GM12878 (cell line): ENCODE measurements at regions of chr13 and their contacts with region 1.

Region 1: DNA sequence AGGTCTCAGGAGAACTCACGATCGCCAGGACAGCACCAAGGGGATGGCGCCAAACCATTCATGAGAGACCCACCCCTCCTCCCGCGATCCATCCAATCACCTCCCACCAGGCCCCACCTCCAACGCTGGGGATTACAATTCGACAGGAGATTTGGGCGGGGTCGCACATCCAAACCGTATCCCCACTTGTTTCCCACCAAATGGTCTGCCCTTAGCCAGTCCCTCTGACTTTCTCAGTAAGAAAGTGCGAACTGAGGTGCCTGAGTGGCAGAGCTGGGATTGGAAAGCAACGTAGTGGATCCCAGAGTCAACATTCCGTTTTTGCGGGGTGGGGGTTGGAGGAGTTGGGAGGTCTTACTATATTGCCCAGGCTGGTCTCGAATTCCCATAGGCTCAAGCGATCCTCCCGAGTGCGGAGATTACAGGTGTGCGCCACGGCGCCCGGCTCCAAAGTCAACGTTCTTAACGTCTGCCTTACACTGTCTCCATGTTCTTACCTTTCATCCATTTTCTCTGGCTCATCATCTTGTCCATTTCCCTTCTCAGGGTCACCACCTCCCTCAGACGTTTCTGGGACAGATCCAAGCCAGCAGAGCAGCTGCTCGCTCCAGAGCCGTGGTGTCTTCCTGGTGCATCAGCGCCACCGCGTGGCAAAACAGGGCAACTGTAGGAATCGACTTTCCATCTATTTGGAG is 102.7 kb upstream of the ABCC4 start:
- DNase-seq: peak; percentile 48
- ATAC-seq: peak; percentile 95
- H3K4me3 ChIP-seq: peak overlapping the region; percentile 65
- H3K27ac ChIP-seq: peak overlapping the region; percentile 36; the same call in 1 of the 2 replicates
- H3K4me1 ChIP-seq: peaks cover 7% of the 10 kb centered on the region; the same call in 1 of the 2 replicates
- H3K27me3 ChIP-seq: no peaks in the 10 kb centered on the region
- CTCF ChIP-seq: peak; percentile 91 to 97 (median 93); a peak in 5 of 6 replicates
- EP300 ChIP-seq: no peak
- POLR2A ChIP-seq: no peak
- RAD21 ChIP-seq: peak; percentile 100

Region 2: GRCh38 chr13:94620286-94620896 is 783.6 kb before region 1 on chr13:
- CTCF ChIA-PET with region 1: interaction called, 38 read pairs
- POLR2A ChIA-PET with region 1: no interaction called
- RAD21 ChIA-PET with region 1: interaction called, 16 read pairs
- SMC1A ChIA-PET with region 1: interaction called, 11 read pairs
- in situ Hi-C with region 1: no loop called
- intact Hi-C with region 1: loop called (anchors 2 kb)
- DNase-seq: no peak
- ATAC-seq: peak; percentile 90
- H3K4me3 ChIP-seq: no peak overlapping the region
- H3K27ac ChIP-seq: no peak overlapping the region
- H3K4me1 ChIP-seq: no peaks in the 10 kb centered on the region
- H3K27me3 ChIP-seq: no peaks in the 10 kb centered on the region
- CTCF ChIP-seq: peak; percentile 73 to 79 (median 73)
- EP300 ChIP-seq: no peak
- POLR2A ChIP-seq: no peak
- RAD21 ChIP-seq: peak; percentile 79

Region 3: GRCh38 chr13:95150555-95150954 is 253.4 kb before region 1 on chr13:
- CTCF ChIA-PET with region 1: interaction called, 16 read pairs
- POLR2A ChIA-PET with region 1: no interaction called
- RAD21 ChIA-PET with region 1: interaction called, 5 read pairs
- SMC1A ChIA-PET with region 1: interaction called, 5 read pairs
- in situ Hi-C with region 1: no loop called
- intact Hi-C with region 1: no loop called
- DNase-seq: no peak
- ATAC-seq: no peak
- H3K4me3 ChIP-seq: no peak overlapping the region
- H3K27ac ChIP-seq: no peak overlapping the region
- H3K4me1 ChIP-seq: no peaks in the 10 kb centered on the region
- H3K27me3 ChIP-seq: no peaks in the 10 kb centered on the region
- CTCF ChIP-seq: no peak
- EP300 ChIP-seq: no peak
- POLR2A ChIP-seq: no peak
- RAD21 ChIP-seq: no peak

Region 4: DNA sequence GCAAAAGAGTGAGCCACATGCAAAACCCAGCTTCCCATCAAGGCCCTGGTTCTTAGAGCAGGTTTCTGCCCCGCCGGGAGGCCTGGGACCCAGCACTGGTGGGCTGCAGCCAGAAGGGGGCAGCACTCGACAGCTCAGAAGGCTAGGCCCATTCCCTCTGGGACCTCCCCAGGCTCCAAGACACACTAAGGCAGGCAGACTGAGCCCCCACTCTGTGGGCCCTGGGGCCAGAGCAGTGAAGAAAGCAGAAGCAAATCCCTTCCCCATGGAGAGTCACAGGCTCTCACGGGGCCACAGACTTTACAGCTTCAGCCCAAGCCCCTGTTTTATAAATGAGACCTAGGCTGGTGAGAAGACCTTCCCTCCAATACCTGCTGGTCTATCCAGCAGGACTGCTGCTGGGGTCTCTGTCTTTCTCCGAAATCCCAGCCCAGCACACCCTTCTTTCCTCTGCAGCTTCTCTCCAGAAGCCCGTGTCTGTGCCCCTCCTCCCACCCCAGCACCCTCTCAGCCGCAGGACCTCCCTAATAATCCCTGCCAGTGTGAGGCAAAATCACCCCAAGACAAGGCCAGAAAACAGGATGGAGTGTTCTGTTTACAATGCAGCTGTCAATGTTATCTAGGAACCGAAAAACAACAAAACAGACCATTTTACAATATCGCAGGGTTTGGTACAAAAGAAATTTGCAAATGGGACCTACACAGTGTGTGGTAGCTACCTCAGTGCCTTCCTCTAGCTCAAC is 212.0 kb before region 1 on chr13:
- CTCF ChIA-PET with region 1: interaction called, 512 read pairs
- POLR2A ChIA-PET with region 1: interaction called, 3 read pairs
- RAD21 ChIA-PET with region 1: interaction called, 290 read pairs
- SMC1A ChIA-PET with region 1: interaction called, 247 read pairs
- in situ Hi-C with region 1: loop called (anchors 5 kb)
- intact Hi-C with region 1: loop called (anchors 1 kb)
- DNase-seq: peak; percentile 45
- ATAC-seq: peak; percentile 99
- H3K4me3 ChIP-seq: no peak overlapping the region
- H3K27ac ChIP-seq: peak overlapping the region; percentile 20; the same call in 1 of the 2 replicates
- H3K4me1 ChIP-seq: peaks cover 4% of the 10 kb centered on the region; the same call in 1 of the 2 replicates
- H3K27me3 ChIP-seq: no peaks in the 10 kb centered on the region
- CTCF ChIP-seq: peak; percentile 94 to 98 (median 97)
- EP300 ChIP-seq: no peak
- POLR2A ChIP-seq: no peak
- RAD21 ChIP-seq: peak; percentile 92

Region 5: GRCh38 chr13:95301183-95301967 is 102.6 kb before region 1 on chr13 and contains the start of gene ABCC4:
- CTCF ChIA-PET with region 1: interaction called, 69 read pairs
- POLR2A ChIA-PET with region 1: no interaction called
- RAD21 ChIA-PET with region 1: interaction called, 79 read pairs
- SMC1A ChIA-PET with region 1: interaction called, 68 read pairs
- in situ Hi-C with region 1: no loop called
- intact Hi-C with region 1: loop called (anchors 2 kb)
- DNase-seq: no peak
- ATAC-seq: peak; percentile 86
- H3K4me3 ChIP-seq: peak within 1 kb of the TSS; percentile 94
- H3K27ac ChIP-seq: peak within 1 kb of the TSS; percentile 89
- H3K4me1 ChIP-seq: peaks cover 14% of the 10 kb centered on the region
- H3K27me3 ChIP-seq: no peaks in the 10 kb centered on the region
- CTCF ChIP-seq: no peak; a peak in 1 of 6 replicates
- EP300 ChIP-seq: no peak
- POLR2A ChIP-seq: peak; percentile 88
- RAD21 ChIP-seq: 0 out of 2 replicates have a peak, but pooled peaks have one; percentile 1
- polyA plus RNA-seq, gene ABCC4: 7.2 to 8.0 TPM

Region 6: DNA sequence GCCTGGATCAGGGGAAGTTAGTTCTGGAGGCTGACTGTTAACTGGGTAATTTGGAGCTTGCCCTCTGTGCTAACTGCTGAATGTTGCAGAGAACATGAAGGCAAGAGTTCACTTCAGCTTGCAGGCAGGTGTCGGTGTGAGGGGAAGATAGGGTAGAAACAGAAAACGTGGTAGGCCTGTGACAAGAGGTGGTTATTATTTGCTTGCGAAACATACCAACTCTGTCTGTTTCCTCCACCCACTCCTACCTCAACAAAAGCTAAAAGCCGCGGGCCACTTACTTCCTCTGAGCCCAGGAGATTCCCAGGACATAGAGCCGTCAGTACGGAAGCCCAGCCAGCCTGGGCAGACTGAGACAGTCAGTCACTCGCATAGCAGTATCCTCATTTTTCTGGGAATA is 16.5 kb after region 1 on chr13:
- CTCF ChIA-PET with region 1: interaction called, 28 read pairs
- POLR2A ChIA-PET with region 1: no interaction called
- RAD21 ChIA-PET with region 1: interaction called, 14 read pairs
- SMC1A ChIA-PET with region 1: interaction called, 13 read pairs
- in situ Hi-C with region 1: no loop called
- intact Hi-C with region 1: no loop called
- DNase-seq: no peak
- ATAC-seq: no peak; the same call in 1 of the 3 replicates
- H3K4me3 ChIP-seq: no peak overlapping the region
- H3K27ac ChIP-seq: no peak overlapping the region
- H3K4me1 ChIP-seq: no peaks in the 10 kb centered on the region
- H3K27me3 ChIP-seq: no peaks in the 10 kb centered on the region
- CTCF ChIP-seq: no peak
- EP300 ChIP-seq: no peak
- POLR2A ChIP-seq: no peak
- RAD21 ChIP-seq: no peak

Region 7: GRCh38 chr13:95834134-95834765 is 430.3 kb after region 1 on chr13:
- CTCF ChIA-PET with region 1: interaction called, 4 read pairs
- POLR2A ChIA-PET with region 1: no interaction called
- RAD21 ChIA-PET with region 1: no interaction called
- SMC1A ChIA-PET with region 1: no interaction called
- in situ Hi-C with region 1: no loop called
- intact Hi-C with region 1: loop called (anchors 10 kb)
- DNase-seq: peak; percentile 28
- ATAC-seq: peak; percentile 97
- H3K4me3 ChIP-seq: no peak overlapping the region
- H3K27ac ChIP-seq: no peak overlapping the region
- H3K4me1 ChIP-seq: no peaks in the 10 kb centered on the region
- H3K27me3 ChIP-seq: no peaks in the 10 kb centered on the region
- CTCF ChIP-seq: peak; percentile 89 to 98 (median 94)
- EP300 ChIP-seq: no peak
- POLR2A ChIP-seq: no peak
- RAD21 ChIP-seq: peak; percentile 96